PC-9 (cell line): ENCODE measurements at regions of chr5 and their contacts with region 1.

Region 1: GRCh38 chr5:68519143-68519542 is 303.6 kb downstream of the PIK3R1 start:
- DNase-seq: no peak
- H3K4me3 ChIP-seq: no peak overlapping the region
- H3K27ac ChIP-seq: no peak overlapping the region
- H3K4me1 ChIP-seq: no peaks in the 10 kb centered on the region
- H3K27me3 ChIP-seq: no peaks in the 10 kb centered on the region
- CTCF ChIP-seq: no peak

Region 2: GRCh38 chr5:68490406-68490805 is 28.7 kb before region 1 on chr5:
- CTCF ChIA-PET with region 1: interaction called, 15 read pairs
- POLR2A ChIA-PET with region 1: no interaction called
- intact Hi-C with region 1: no loop called
- DNase-seq: no peak
- H3K4me3 ChIP-seq: no peak overlapping the region
- H3K27ac ChIP-seq: no peak overlapping the region
- H3K4me1 ChIP-seq: no peaks in the 10 kb centered on the region
- H3K27me3 ChIP-seq: no peaks in the 10 kb centered on the region
- CTCF ChIP-seq: no peak

Region 3: DNA sequence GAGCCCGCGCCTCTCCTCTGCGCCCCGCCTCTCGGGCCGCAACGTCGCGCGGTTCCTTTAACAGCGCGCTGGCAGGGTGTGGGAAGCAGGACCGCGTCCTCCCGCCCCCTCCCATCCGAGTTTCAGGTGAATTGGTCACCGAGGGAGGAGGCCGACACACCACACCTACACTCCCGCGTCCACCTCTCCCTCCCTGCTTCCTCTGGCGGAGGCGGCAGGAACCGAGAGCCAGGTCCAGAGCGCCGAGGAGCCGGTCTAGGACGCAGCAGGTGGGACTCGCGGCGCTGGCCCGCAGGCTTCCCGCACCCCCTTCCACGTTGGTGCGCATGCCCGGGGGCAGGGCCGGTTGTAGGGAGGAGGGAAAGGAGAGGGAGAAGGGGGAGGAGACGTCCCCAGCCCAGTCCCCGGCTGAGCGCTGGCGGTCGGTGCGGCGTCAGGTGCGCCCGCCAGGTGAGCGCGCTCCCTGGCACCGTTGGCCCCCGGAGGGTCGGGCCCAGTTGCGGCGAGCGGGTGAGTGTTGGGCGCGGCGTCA is 973.3 kb after region 1 on chr5 and contains the start of gene OCLN:
- CTCF ChIA-PET with region 1: no interaction called
- POLR2A ChIA-PET with region 1: no interaction called
- intact Hi-C with region 1: no loop called
- DNase-seq: peak; percentile 83 to 92
- H3K4me3 ChIP-seq: peak within 1 kb of the TSS; percentile 80
- H3K27ac ChIP-seq: peak within 1 kb of the TSS; percentile 99
- H3K4me1 ChIP-seq: peaks cover 44% of the 10 kb centered on the region
- H3K27me3 ChIP-seq: no peaks in the 10 kb centered on the region
- CTCF ChIP-seq: no peak
- total RNA-seq, gene OCLN: 66.5 and 77.4 TPM in 2 replicates